ENCODE measurements at regions of chr7 and their contacts with region 1.

Region 1: GRCh38 chr7:5694912-5695726 is 86.3 kb downstream of the RNF216 start:
- DNase-seq: peak; percentile 43 to 86 (median 72)
- ATAC-seq: peak; percentile 71 to 73
- H3K4me3 Mint-ChIP-seq: peak overlapping the region; percentile 87 to 99 (median 94)
- H3K27ac Mint-ChIP-seq: peak overlapping the region; percentile 93 to 98 (median 96)
- H3K4me1 Mint-ChIP-seq: peaks cover 57 to 100% (median 98%) of the 10 kb centered on the region in 4 donors
- H3K27me3 Mint-ChIP-seq: no peaks in the 10 kb centered on the region

Region 2: DNA sequence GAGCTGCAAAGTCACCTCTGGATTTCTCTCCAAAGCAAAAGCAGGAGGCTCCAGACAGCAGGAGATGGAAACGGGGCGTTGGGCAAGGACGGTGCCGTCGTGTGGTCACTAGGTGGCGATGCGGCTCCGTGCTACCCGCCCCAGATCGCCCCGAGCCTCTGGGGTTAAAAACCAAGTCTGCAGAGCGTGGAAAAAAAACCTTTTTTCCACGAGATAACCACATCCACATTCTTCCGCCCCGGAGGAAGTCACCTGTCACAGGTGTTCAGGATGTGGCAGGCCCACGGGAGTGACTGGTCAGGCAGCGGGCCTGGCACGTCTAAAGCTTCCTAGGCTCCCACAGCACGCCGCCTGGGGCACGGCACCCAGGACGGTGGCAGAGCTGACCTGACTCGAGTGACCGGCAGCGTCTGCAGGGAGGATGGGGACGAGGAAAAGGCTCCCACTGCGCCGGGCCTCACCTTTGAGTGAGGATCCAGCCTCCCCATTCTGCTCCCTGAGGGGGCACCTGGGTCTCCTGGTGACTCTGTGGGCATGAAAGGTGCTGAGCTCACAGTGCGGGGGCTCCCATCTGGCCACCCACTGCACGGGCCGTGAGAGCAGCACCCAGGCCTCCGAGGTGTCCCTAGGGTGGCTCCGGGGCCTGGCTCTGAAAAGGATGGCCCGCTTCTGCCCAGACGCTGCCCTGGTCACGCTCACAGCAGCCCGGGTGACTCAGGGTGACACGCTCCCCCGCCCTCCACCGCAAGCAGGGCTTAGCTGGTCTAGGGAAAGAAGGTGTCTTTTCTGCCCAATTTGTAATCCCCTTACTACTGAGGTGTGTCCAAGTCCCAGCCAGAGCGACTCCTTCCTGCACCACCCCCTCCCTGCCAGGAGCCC is 200.2 kb before region 1 on chr7:
- POLR2A ChIA-PET with region 1: interaction called, 14 read pairs
- DNase-seq: peak; percentile 65 to 87 (median 74)
- ATAC-seq: peak; percentile 75 to 81
- H3K4me3 Mint-ChIP-seq: peak overlapping the region; percentile 18 to 80 (median 51)
- H3K27ac Mint-ChIP-seq: peak overlapping the region in 4 of 10 donors; percentile 34 to 70 (median 56)
- H3K4me1 Mint-ChIP-seq: peaks cover 29 to 57% (median 46%) of the 10 kb centered on the region in 4 donors
- H3K27me3 Mint-ChIP-seq: no peaks in the 10 kb centered on the region

Region 3: GRCh38 chr7:5607951-5608656 is 87.0 kb before region 1 on chr7:
- POLR2A ChIA-PET with region 1: no interaction called
- DNase-seq: no peak
- ATAC-seq: no peak
- H3K4me3 Mint-ChIP-seq: no peak overlapping the region
- H3K27ac Mint-ChIP-seq: peak overlapping the region in 1 of 10 donors; percentile 88
- H3K4me1 Mint-ChIP-seq: peaks cover 0 to 5% (median 0%) of the 10 kb centered on the region in 4 donors
- H3K27me3 Mint-ChIP-seq: no peaks in the 10 kb centered on the region

Region 4: DNA sequence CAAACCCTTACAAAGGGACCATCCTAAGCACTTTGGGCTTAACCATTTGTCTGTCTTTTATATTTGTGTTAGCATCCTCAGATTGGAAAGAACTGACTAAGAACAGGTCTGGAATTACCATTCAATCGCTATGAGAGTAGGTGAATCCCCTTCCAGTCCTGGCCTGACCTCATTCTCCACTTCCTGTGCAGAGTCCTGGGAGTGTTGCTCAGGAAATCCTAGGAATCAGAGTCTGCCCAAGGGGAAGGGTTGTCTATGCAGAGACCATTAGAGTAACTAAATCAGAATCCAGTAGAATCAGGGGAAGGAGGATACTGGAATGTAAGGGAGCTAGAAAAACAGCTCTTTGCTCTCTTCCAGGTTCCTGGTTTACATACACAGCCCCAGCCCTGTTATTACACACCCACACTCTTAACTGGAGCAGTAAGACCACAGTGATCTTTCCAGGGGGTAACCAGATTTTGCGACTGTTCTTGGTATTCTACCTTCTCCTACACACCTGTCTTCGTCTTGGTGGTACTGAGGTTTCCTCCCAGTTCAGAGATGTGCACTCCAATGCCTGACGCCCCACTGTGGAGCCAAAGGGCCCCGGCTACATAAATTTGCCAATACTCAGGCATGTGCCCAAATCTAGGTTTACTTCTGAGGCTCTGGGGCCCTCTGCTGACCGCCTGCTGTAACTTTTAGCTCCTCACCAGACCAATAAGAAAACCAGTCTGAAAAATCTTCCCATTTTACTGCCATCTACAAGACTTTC is 17.4 kb before region 1 on chr7:
- POLR2A ChIA-PET with region 1: interaction called, 13 read pairs
- DNase-seq: peak in 4 of 10 donors; percentile 25 to 48 (median 34)
- ATAC-seq: peak; percentile 60 to 72
- H3K4me3 Mint-ChIP-seq: no peak overlapping the region
- H3K27ac Mint-ChIP-seq: peak overlapping the region; percentile 45 to 87 (median 66)
- H3K4me1 Mint-ChIP-seq: peaks cover 34 to 76% (median 66%) of the 10 kb centered on the region in 4 donors
- H3K27me3 Mint-ChIP-seq: no peaks in the 10 kb centered on the region